ENCODE measurements at regions of chr10 and their contacts with region 1.

Region 1: DNA sequence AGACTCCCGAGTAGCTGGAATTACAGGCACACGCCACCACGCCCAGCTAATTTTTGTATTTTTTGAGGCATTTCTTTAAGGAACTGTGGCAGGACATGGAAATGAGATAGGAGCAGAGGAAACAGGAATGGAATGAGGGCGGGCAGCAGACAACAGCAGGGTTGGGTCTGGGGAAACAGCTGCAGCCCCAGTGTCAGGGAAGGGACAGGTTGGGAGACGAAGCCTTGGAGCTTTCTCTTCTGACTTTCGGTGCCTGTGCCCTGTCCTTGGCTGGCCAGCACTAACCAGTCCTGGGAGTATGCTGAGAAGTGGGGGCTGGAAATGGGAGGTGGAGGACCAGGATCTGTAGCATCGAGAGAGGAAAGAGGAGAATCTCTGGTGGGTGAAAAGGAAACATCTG is 47.4 kb downstream of the ATOH7 start:
- DNase-seq: no peak
- ATAC-seq: peak in 3 of 4 donors; percentile 19 to 24 (median 21)
- H3K4me3 ChIP-seq: no peak overlapping the region
- H3K27ac ChIP-seq: peak overlapping the region; percentile 54
- H3K4me1 ChIP-seq: no peaks in the 10 kb centered on the region
- H3K27me3 ChIP-seq: no peaks in the 10 kb centered on the region
- CTCF ChIP-seq: no peak

Region 2: GRCh38 chr10:67269828-67270227 is 914.7 kb before region 1 on chr10:
- intact Hi-C with region 1: loop called in 1 of 2 experiments (anchors 5 kb)
- DNase-seq: no peak
- ATAC-seq: no peak
- H3K4me3 ChIP-seq: no peak overlapping the region
- H3K27ac ChIP-seq: no peak overlapping the region
- H3K4me1 ChIP-seq: no peaks in the 10 kb centered on the region
- H3K27me3 ChIP-seq: no peaks in the 10 kb centered on the region
- CTCF ChIP-seq: no peak

Region 3: GRCh38 chr10:68067029-68067428 is 117.5 kb before region 1 on chr10:
- intact Hi-C with region 1: no loop called
- DNase-seq: no peak
- ATAC-seq: no peak
- H3K4me3 ChIP-seq: no peak overlapping the region
- H3K27ac ChIP-seq: no peak overlapping the region
- H3K4me1 ChIP-seq: peaks cover 17% of the 10 kb centered on the region
- H3K27me3 ChIP-seq: no peaks in the 10 kb centered on the region
- CTCF ChIP-seq: no peak

Measured in psoas muscle (tissue), 8 donors.